ENCODE measurements at regions of chr22 and their contacts with region 1.

Region 1: GRCh38 chr22:45246060-45246985 is 5.6 kb upstream of the KIAA0930 start:
- DNase-seq: peak; percentile 86 to 89
- H3K4me3 ChIP-seq: no peak overlapping the region
- H3K4me3 Mint-ChIP-seq: peak overlapping the region; percentile 65
- H3K27ac Mint-ChIP-seq: peak overlapping the region; percentile 95
- H3K4me1 ChIP-seq: peaks cover 35% of the 10 kb centered on the region
- H3K4me1 Mint-ChIP-seq: peaks cover 13% of the 10 kb centered on the region
- H3K27me3 ChIP-seq: no peaks in the 10 kb centered on the region
- H3K27me3 Mint-ChIP-seq: no peaks in the 10 kb centered on the region
- CTCF ChIP-seq: no peak

Region 2: GRCh38 chr22:44956840-44957767 is 289.2 kb before region 1 on chr22:
- CTCF ChIA-PET with region 1: no interaction called
- POLR2A ChIA-PET with region 1: no interaction called
- intact Hi-C with region 1: no loop called
- DNase-seq: no peak
- H3K4me3 ChIP-seq: no peak overlapping the region
- H3K4me3 Mint-ChIP-seq: no peak overlapping the region
- H3K27ac Mint-ChIP-seq: no peak overlapping the region
- H3K4me1 ChIP-seq: no peaks in the 10 kb centered on the region
- H3K4me1 Mint-ChIP-seq: no peaks in the 10 kb centered on the region
- H3K27me3 ChIP-seq: no peaks in the 10 kb centered on the region; the same call in 1 of the 2 replicates
- H3K27me3 Mint-ChIP-seq: peaks cover 29% of the 10 kb centered on the region
- CTCF ChIP-seq: peak; percentile 19 to 42

Region 3: DNA sequence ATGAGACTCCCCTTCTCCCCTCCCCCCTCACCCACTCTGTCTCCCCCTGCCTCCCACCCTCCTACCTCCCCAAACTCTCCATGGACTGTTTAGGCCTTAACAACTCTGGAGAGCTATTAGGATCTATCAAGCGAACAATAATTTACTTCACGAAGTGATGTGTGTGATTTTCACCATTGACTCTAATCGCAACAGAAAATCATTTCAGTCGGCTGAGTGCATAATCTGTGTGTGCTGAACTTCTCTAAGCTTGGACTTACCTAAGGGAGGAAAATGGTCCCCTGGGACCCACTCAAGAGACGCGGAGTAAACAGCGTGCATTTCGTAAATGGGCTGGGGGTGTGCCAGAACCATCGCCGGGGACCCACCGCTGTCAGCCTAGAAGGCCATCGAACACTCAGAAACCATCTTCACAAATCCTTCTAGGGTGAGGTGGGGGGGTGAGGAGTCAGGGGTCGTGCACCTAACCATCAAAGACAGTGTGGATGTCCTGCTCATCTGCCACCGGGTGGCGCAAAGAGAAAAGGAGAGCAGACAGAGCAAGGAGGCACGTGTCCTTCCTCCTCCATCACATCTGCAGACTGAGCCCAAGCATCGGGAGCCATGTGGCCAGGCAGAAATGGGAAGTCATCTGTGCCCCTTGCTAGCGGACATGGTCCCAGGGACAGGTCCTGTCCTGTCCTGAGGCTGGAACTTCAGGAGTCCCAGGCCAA is 144.7 kb before region 1 on chr22:
- CTCF ChIA-PET with region 1: no interaction called
- POLR2A ChIA-PET with region 1: no interaction called
- intact Hi-C with region 1: loop called (anchors 5 kb)
- DNase-seq: peak; percentile 75
- H3K4me3 ChIP-seq: no peak overlapping the region
- H3K4me3 Mint-ChIP-seq: no peak overlapping the region
- H3K27ac Mint-ChIP-seq: no peak overlapping the region
- H3K4me1 ChIP-seq: no peaks in the 10 kb centered on the region
- H3K4me1 Mint-ChIP-seq: peaks cover 15% of the 10 kb centered on the region
- H3K27me3 ChIP-seq: no peaks in the 10 kb centered on the region
- H3K27me3 Mint-ChIP-seq: no peaks in the 10 kb centered on the region
- CTCF ChIP-seq: peak; percentile 63 to 73

Region 4: DNA sequence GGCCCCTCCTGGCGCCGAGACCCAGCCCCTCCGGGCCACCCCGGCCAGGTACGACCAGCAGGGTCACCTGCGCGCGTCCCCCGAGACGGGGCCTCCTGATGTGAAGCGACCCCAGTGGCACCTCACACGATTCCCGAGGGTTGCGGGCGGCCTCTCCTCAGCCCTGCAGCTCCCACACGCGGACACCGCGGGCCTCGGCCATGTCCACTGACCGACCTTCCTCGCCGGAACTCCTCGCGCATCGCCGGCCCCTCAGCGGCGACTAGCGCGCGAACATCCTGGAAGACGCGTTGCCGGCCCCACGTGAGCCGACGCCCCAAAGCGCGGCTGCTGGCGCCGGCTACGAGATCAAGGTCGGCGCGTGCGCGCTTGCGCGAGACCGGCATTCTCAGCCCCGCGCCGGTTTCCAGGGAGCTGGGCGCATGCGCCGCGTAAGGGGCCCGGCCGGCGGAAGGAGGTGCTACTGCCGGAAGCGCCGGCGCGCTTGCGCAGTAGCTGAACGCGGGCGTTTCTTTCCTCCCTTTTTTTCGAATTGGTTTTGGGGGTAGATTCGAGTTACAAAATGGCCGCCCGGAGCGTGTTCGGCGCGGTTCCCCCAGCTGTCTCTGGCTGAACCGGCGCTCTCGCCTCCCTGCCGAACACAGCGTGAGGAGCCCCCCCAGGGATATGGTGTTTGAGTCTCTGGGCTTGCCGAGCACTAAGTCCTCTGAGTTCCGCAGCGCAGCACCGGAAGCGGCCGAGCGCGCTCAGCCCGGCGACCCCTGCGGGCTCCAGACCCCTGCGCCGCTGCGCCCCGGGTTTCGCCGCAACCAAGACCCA is 82.7 kb before region 1 on chr22 and contains the start of gene NUP50:
- CTCF ChIA-PET with region 1: no interaction called
- POLR2A ChIA-PET with region 1: interaction called, 20 read pairs
- intact Hi-C with region 1: no loop called
- DNase-seq: peak; percentile 95 to 98
- H3K4me3 ChIP-seq: peak within 1 kb of the TSS; percentile 78
- H3K4me3 Mint-ChIP-seq: peak within 1 kb of the TSS; percentile 100
- H3K27ac Mint-ChIP-seq: peak within 1 kb of the TSS; percentile 97
- H3K4me1 ChIP-seq: peaks cover 47% of the 10 kb centered on the region
- H3K4me1 Mint-ChIP-seq: peaks cover 38% of the 10 kb centered on the region
- H3K27me3 ChIP-seq: no peaks in the 10 kb centered on the region
- H3K27me3 Mint-ChIP-seq: no peaks in the 10 kb centered on the region
- CTCF ChIP-seq: no peak
- total RNA-seq, gene NUP50: 122 and 128 TPM in 2 replicates

Region 5: DNA sequence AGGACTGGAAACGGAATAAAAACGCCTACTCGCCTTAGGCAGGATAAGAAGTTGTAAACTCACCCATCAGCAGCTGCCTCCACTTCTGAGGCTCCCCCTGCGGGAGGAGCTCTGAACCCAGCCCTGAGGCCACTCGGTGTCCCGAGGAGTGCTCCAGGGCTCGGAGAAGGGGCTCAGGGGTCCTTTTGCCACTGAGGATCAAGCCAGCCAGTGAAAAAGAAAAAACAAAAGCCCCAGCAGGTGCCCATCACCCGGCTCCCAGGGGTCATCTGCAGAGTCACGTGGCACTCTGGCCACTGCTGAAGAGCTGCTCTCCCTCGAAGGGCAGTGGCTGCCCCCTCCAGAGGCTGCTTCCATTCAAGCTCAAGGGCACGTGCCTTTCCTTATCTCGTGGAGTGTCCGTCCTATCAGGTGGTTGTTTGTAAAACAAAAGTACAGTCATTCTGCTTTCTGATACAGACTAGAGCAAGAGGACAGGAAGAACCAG is 53.6 kb before region 1 on chr22:
- CTCF ChIA-PET with region 1: interaction called, 8 read pairs
- POLR2A ChIA-PET with region 1: interaction called, 11 read pairs
- intact Hi-C with region 1: no loop called
- DNase-seq: peak in 1 of 2 experiments; percentile 64
- H3K4me3 ChIP-seq: no peak overlapping the region
- H3K4me3 Mint-ChIP-seq: no peak overlapping the region
- H3K27ac Mint-ChIP-seq: no peak overlapping the region
- H3K4me1 ChIP-seq: peaks cover 12% of the 10 kb centered on the region
- H3K4me1 Mint-ChIP-seq: peaks cover 18% of the 10 kb centered on the region
- H3K27me3 ChIP-seq: no peaks in the 10 kb centered on the region
- H3K27me3 Mint-ChIP-seq: no peaks in the 10 kb centered on the region
- CTCF ChIP-seq: peak in 1 of 2 experiments; percentile 42

Region 6: GRCh38 chr22:45263463-45264269 is 17.3 kb after region 1 on chr22:
- CTCF ChIA-PET with region 1: interaction called, 10 read pairs
- POLR2A ChIA-PET with region 1: no interaction called
- intact Hi-C with region 1: loop called (anchors 1 kb)
- DNase-seq: peak; percentile 84 to 85
- H3K4me3 ChIP-seq: no peak overlapping the region
- H3K4me3 Mint-ChIP-seq: no peak overlapping the region
- H3K27ac Mint-ChIP-seq: peak overlapping the region; percentile 33
- H3K4me1 ChIP-seq: peaks cover 12% of the 10 kb centered on the region
- H3K4me1 Mint-ChIP-seq: peaks cover 9% of the 10 kb centered on the region
- H3K27me3 ChIP-seq: no peaks in the 10 kb centered on the region
- H3K27me3 Mint-ChIP-seq: no peaks in the 10 kb centered on the region
- CTCF ChIP-seq: peak; percentile 79 to 96